ENCODE measurements at regions of chr1 and their contacts with region 1.

Region 1: GRCh38 chr1:36397378-36398230 is at the start of gene LSM10:
- DNase-seq: peak; percentile 93 to 98
- ATAC-seq: peak; percentile 98
- total RNA-seq, gene LSM10: 24.1 to 24.2 TPM

Region 2: GRCh38 chr1:37474046-37474759 is 1076.6 kb after region 1 on chr1 and contains the start of gene ZC3H12A:
- intact Hi-C with region 1: loop called in 1 of 2 experiments (anchors 10 kb)
- DNase-seq: peak; percentile 91 to 96
- ATAC-seq: peak; percentile 66
- total RNA-seq, gene ZC3H12A: 24.0 to 61.6 TPM

Measured in left colon (tissue), 2 donors.